ENCODE measurements at regions of chr10 and their contacts with region 1.

Region 1: DNA sequence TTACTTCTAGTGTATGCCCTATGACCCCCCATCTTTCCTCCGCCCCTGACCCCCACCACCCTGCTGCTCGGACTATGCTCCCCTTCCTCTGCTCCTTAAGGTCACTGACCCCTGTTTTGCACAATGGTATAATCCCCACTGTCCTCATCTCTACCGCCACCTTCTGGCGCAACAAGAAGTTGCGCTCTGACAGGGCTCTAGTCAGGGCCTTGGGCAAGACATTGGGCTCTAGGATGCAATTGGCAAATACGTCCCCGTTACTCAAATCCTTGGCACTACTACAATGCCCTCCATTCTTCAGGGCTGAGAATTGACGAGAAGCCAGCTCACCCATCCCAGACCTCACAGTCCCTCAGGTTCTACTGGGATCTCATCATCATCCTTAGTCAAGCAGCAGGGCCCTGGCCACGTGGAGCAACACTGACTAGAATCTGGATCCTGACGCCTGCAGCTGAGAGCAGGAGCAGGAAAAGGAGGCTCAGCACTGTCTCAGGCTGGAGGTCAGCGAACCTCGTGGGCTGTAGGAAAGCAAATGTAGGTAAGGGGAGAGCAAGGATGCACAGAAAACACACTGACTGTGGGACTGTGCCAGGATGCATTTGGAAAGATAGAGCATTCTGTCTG is 10.6 kb downstream of the LRIT2 start:
- DNase-seq: peak; percentile 57 to 84
- H3K4me3 ChIP-seq: no peak overlapping the region
- H3K27ac ChIP-seq: no peak overlapping the region
- H3K4me1 ChIP-seq: peaks cover 0 to 4% (median 0%) of the 10 kb centered on the region in 4 experiments; a peak in 1 of 7 replicates
- H3K27me3 ChIP-seq: no peaks in the 10 kb centered on the region
- CTCF ChIP-seq: peak; percentile 79 to 91 (median 90)
- EP300 ChIP-seq: peak in 1 of 2 experiments; percentile 86; a peak in 2 of 3 replicates
- POLR2A ChIP-seq: no peak
- RAD21 ChIP-seq: peak; percentile 55 to 70

Region 2: DNA sequence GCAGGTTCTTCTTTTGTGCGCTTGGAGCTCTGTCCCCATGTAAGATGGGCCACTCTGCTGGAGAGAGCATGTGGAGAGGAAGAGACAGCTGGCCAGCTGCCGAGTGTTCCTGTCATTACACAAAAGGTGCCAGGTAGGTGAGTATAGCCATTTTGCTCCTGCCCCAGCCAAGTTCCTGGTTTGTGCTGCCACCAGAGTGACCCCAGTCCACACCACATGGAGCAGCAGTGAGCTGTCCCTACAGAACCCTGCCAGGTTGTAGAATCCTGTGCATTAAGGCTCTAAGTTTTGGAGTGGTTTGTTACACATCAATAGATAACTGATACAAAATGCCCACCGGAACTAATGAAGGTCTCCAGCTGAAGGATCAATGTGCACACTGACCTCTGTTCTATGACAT is 160.0 kb before region 1 on chr10:
- CTCF ChIA-PET with region 1: no interaction called
- POLR2A ChIA-PET with region 1: no interaction called
- DNase-seq: no peak
- H3K4me3 ChIP-seq: no peak overlapping the region
- H3K27ac ChIP-seq: no peak overlapping the region
- H3K4me1 ChIP-seq: peaks cover 0 to 4% (median 1%) of the 10 kb centered on the region in 4 experiments; a peak in 1 of 7 replicates
- H3K27me3 ChIP-seq: no peaks in the 10 kb centered on the region
- CTCF ChIP-seq: peak; percentile 41 to 53 (median 50)
- EP300 ChIP-seq: no peak
- POLR2A ChIP-seq: no peak
- RAD21 ChIP-seq: peak; percentile 31 to 35; a peak in 2 of 4 replicates

Region 3: DNA sequence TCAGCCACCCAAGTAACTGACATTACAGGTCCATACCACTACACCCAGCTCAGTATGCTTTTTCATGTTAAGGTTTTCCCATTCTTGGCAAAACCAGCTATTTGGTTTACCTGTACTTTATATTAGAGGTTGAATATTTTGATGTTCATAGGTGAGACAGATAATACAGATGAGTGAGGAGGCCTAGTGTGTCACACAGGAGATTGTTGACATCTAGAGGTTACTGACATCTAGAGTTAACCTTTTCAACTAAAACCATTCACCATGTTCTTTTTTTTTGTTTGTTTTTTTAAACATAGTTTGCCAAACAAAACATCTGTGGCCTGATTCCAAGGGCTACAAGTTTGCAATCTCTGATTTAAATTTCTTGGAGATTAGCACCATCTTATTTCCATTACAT is 67.4 kb before region 1 on chr10:
- CTCF ChIA-PET with region 1: interaction called, 35 read pairs
- POLR2A ChIA-PET with region 1: no interaction called
- DNase-seq: no peak
- H3K4me3 ChIP-seq: no peak overlapping the region
- H3K27ac ChIP-seq: no peak overlapping the region
- H3K4me1 ChIP-seq: no peaks in the 10 kb centered on the region
- H3K27me3 ChIP-seq: no peaks in the 10 kb centered on the region
- CTCF ChIP-seq: no peak
- EP300 ChIP-seq: no peak
- POLR2A ChIP-seq: no peak
- RAD21 ChIP-seq: no peak

Region 4: DNA sequence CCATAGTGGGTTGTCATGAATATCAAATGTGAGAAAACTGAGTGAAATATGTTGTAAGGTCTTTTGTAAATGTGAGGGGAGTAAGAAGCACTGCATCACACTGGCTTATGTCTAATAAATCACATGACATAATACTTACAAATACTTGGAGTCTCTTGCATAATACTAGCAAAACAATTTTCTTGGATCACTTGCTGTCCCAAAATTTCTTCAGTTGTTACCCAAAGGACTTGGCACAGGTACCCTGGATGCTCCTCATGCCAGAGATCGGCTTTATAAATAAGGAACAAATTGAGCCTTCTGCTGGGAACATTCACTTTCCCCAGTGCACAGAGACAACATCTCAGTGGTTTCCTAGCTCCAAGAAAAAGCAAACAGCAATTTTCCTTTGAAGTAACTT is 15.6 kb after region 1 on chr10:
- CTCF ChIA-PET with region 1: interaction called, 59 read pairs
- POLR2A ChIA-PET with region 1: no interaction called
- DNase-seq: no peak
- H3K4me3 ChIP-seq: no peak overlapping the region
- H3K27ac ChIP-seq: no peak overlapping the region
- H3K4me1 ChIP-seq: no peaks in the 10 kb centered on the region
- H3K27me3 ChIP-seq: no peaks in the 10 kb centered on the region; a peak in 1 of 7 replicates
- CTCF ChIP-seq: no peak
- EP300 ChIP-seq: no peak
- POLR2A ChIP-seq: no peak
- RAD21 ChIP-seq: no peak

Region 5: DNA sequence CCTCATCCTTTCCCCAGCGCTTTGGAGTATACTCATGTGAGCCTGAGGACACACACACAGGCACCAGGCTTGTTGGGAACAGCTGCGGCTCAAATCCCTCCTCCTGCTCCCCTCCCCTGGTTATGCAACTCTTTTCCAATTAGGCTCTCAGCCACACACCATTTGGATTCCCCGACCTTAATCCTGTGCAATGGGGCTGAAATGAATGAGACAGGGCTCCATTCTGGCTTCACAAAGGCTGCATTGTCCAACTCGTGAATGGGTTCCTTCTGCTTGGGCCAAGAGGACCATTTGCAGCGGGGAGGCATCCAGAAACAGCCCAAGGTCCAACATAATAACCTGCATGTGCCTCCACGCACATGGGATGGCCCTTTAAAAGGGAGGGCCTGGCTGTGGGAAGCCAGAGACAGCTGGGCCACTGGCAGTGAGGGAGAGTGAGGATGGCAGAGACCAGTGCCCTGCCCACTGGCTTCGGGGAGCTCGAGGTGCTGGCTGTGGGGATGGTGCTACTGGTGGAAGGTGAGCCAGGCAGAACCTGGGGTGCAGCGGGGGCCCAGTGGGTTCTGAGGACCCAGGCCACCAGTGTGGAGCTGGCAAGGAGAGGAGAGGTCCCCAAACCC is 30.0 kb after region 1 on chr10 and contains the start of gene RGR:
- CTCF ChIA-PET with region 1: interaction called, 20 read pairs
- POLR2A ChIA-PET with region 1: no interaction called
- DNase-seq: no peak
- H3K4me3 ChIP-seq: no peak within 1 kb of the TSS
- H3K27ac ChIP-seq: no peak within 1 kb of the TSS
- H3K4me1 ChIP-seq: no peaks in the 10 kb centered on the region
- H3K27me3 ChIP-seq: no peaks in the 10 kb centered on the region
- CTCF ChIP-seq: no peak
- EP300 ChIP-seq: no peak
- POLR2A ChIP-seq: no peak
- RAD21 ChIP-seq: no peak
- total RNA-seq, gene RGR: not detected in 2 replicates